ENCODE measurements at regions of chr20 and their contacts with region 1.

Region 1: DNA sequence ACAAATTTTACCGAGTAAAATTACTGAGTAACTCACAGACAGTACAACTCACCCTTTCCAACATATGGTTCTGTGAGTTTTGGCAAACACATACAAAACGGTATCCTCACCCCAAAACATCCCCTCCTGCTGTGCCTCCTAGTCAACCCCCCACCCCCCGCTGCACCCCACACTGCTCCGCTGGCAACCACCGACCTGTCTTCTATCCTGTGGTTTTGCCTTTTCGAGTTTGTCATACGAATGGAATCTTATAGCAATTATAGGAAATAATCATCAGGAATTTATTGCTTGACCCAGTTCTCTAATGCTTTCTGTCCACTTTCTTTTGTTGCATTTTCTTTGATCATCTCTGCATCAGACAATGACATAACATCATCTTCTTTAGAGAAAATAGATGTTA is 312.3 kb downstream of the KIF16B start:
- DNase-seq: no peak
- H3K4me3 ChIP-seq: no peak overlapping the region
- H3K27ac ChIP-seq: no peak overlapping the region
- H3K4me1 ChIP-seq: peaks cover 7% of the 10 kb centered on the region
- H3K27me3 ChIP-seq: no peaks in the 10 kb centered on the region
- CTCF ChIP-seq: no peak
- EP300 ChIP-seq: no peak
- POLR2A ChIP-seq: no peak

Region 2: GRCh38 chr20:16222859-16223411 is 38.0 kb before region 1 on chr20:
- intact Hi-C with region 1: loop called in 1 of 4 experiments (anchors 2 kb)
- DNase-seq: no peak
- H3K4me3 ChIP-seq: no peak overlapping the region
- H3K27ac ChIP-seq: no peak overlapping the region
- H3K4me1 ChIP-seq: no peaks in the 10 kb centered on the region
- H3K27me3 ChIP-seq: no peaks in the 10 kb centered on the region
- CTCF ChIP-seq: no peak
- EP300 ChIP-seq: no peak
- POLR2A ChIP-seq: no peak

Measured in ovary (tissue), 10 donors.